ENCODE measurements at regions of chr2 and their contacts with region 1.

Region 1: DNA sequence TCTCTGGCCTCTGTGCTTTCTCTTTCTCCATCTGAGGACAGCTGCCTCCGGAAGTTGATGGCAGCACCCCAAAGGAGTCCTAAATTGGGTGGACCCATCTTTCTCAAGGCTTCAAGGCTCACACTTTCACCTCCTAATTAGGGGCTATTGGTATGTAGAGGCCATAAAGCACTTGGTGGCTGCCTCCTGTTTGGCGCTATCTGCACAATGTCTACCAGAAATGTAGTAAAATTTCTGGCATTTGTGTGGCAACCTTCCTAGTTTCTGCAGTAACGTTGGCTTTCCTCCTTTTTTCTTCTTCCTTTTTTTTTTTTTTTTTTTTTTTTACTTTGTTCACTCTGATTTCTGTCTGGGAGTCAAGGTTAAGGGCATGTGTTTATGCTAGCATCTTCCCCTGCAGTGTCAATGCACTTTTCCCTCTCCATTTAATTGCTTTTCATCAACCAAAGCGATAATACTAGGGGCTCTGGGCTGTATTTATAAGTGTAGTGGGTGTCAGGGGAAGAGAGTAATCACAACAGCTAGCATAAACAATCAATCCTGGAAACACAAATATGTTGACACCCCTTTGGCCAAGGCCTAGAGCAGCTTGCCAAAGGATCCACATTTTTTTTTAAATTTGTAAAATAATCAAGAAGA is 86.0 kb downstream of the TACR1 start:
- DNase-seq: no peak
- H3K4me3 ChIP-seq: no peak overlapping the region
- H3K27ac ChIP-seq: no peak overlapping the region
- H3K4me1 ChIP-seq: no peaks in the 10 kb centered on the region
- H3K27me3 ChIP-seq: no peaks in the 10 kb centered on the region
- CTCF ChIP-seq: no peak
- POLR2A ChIP-seq: no peak

Region 2: DNA sequence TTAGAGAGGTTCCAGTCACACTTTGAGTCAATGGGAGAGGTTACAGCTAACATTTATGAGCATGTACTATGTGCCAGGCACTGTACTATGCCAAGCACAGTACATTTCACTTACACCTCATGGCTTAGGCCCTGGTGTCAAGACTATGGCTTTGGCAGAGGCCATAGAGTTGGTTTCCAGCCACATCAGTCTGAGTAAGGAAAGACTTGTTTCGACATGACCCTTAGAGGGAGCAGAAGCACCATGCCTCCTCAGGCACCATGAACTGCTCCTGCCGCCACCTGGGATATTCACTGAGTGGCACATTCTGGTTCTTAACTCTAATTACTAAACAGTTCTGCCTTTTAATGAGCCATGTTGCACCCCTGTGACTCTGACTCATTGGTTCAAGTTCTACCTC is 1173.9 kb before region 1 on chr2:
- CTCF ChIA-PET with region 1: no interaction called
- POLR2A ChIA-PET with region 1: no interaction called
- dilution Hi-C with region 1: no loop called
- intact Hi-C with region 1: loop called (anchors 5 kb)
- DNase-seq: no peak
- H3K4me3 ChIP-seq: no peak overlapping the region
- H3K27ac ChIP-seq: no peak overlapping the region
- H3K4me1 ChIP-seq: peaks cover 5% of the 10 kb centered on the region
- H3K27me3 ChIP-seq: no peaks in the 10 kb centered on the region
- CTCF ChIP-seq: no peak
- POLR2A ChIP-seq: no peak

Region 3: GRCh38 chr2:75007819-75008218 is 105.5 kb before region 1 on chr2:
- CTCF ChIA-PET with region 1: no interaction called
- POLR2A ChIA-PET with region 1: no interaction called
- dilution Hi-C with region 1: no loop called
- intact Hi-C with region 1: no loop called
- DNase-seq: no peak
- H3K4me3 ChIP-seq: no peak overlapping the region
- H3K27ac ChIP-seq: no peak overlapping the region
- H3K4me1 ChIP-seq: no peaks in the 10 kb centered on the region
- H3K27me3 ChIP-seq: no peaks in the 10 kb centered on the region
- CTCF ChIP-seq: no peak
- POLR2A ChIP-seq: no peak

Region 4: GRCh38 chr2:76281156-76281841 is 1167.9 kb after region 1 on chr2:
- CTCF ChIA-PET with region 1: no interaction called
- POLR2A ChIA-PET with region 1: no interaction called
- dilution Hi-C with region 1: no loop called
- intact Hi-C with region 1: no loop called
- DNase-seq: no peak
- H3K4me3 ChIP-seq: no peak overlapping the region
- H3K27ac ChIP-seq: no peak overlapping the region
- H3K4me1 ChIP-seq: no peaks in the 10 kb centered on the region
- H3K27me3 ChIP-seq: no peaks in the 10 kb centered on the region
- CTCF ChIP-seq: no peak
- POLR2A ChIP-seq: no peak